Activated CD8-positive, alpha-beta T cell treated with anti-CD3 and anti-CD28 coated beads for 36 hours (primary cell): ENCODE measurements at regions of chr7 and their contacts with region 1.

Region 1: GRCh38 chr7:121395961-121396757 is at the start of gene FAM3C:
- DNase-seq: peak; percentile 90
- ATAC-seq: peak; percentile 88
- H3K4me3 Mint-ChIP-seq: peak within 1 kb of the TSS; percentile 79
- H3K27ac Mint-ChIP-seq: peak within 1 kb of the TSS; percentile 92
- H3K4me1 Mint-ChIP-seq: peaks cover 40% of the 10 kb centered on the region
- H3K27me3 Mint-ChIP-seq: no peaks in the 10 kb centered on the region
- CTCF ChIP-seq: peak; percentile 86
- total RNA-seq, gene FAM3C: 18.6 to 19.1 TPM

Region 2: GRCh38 chr7:121366852-121367431 is 29.2 kb before region 1 on chr7:
- CTCF ChIA-PET with region 1: interaction called, 28 read pairs
- POLR2A ChIA-PET with region 1: interaction called, 5 read pairs
- intact Hi-C with region 1: no loop called
- DNase-seq: peak; percentile 33
- ATAC-seq: peak; percentile 45
- H3K4me3 Mint-ChIP-seq: no peak overlapping the region
- H3K27ac Mint-ChIP-seq: no peak overlapping the region
- H3K4me1 Mint-ChIP-seq: peaks cover 24% of the 10 kb centered on the region
- H3K27me3 Mint-ChIP-seq: no peaks in the 10 kb centered on the region
- CTCF ChIP-seq: peak; percentile 84

Region 3: GRCh38 chr7:121372376-121373010 is 23.7 kb before region 1 on chr7:
- CTCF ChIA-PET with region 1: interaction called, 28 read pairs
- POLR2A ChIA-PET with region 1: interaction called, 5 read pairs
- intact Hi-C with region 1: no loop called
- DNase-seq: peak; percentile 13
- ATAC-seq: peak; percentile 81
- H3K4me3 Mint-ChIP-seq: peak overlapping the region; percentile 34
- H3K27ac Mint-ChIP-seq: peak overlapping the region; percentile 88
- H3K4me1 Mint-ChIP-seq: peaks cover 48% of the 10 kb centered on the region
- H3K27me3 Mint-ChIP-seq: no peaks in the 10 kb centered on the region
- CTCF ChIP-seq: no peak

Region 4: GRCh38 chr7:121385800-121386179 is 10.4 kb before region 1 on chr7:
- CTCF ChIA-PET with region 1: interaction called, 83 read pairs
- POLR2A ChIA-PET with region 1: interaction called, 13 read pairs
- intact Hi-C with region 1: no loop called
- DNase-seq: no peak
- ATAC-seq: peak; percentile 86
- H3K4me3 Mint-ChIP-seq: no peak overlapping the region
- H3K27ac Mint-ChIP-seq: peak overlapping the region; percentile 53
- H3K4me1 Mint-ChIP-seq: peaks cover 73% of the 10 kb centered on the region
- H3K27me3 Mint-ChIP-seq: no peaks in the 10 kb centered on the region
- CTCF ChIP-seq: no peak

Region 5: GRCh38 chr7:121406944-121407343 is 10.8 kb after region 1 on chr7:
- CTCF ChIA-PET with region 1: interaction called, 20 read pairs
- POLR2A ChIA-PET with region 1: interaction called, 5 read pairs
- intact Hi-C with region 1: no loop called
- DNase-seq: no peak
- ATAC-seq: no peak
- H3K4me3 Mint-ChIP-seq: no peak overlapping the region
- H3K27ac Mint-ChIP-seq: no peak overlapping the region
- H3K4me1 Mint-ChIP-seq: peaks cover 18% of the 10 kb centered on the region
- H3K27me3 Mint-ChIP-seq: peaks cover 2% of the 10 kb centered on the region
- CTCF ChIP-seq: no peak

Region 6: GRCh38 chr7:121437456-121438127 is 41.4 kb after region 1 on chr7:
- CTCF ChIA-PET with region 1: interaction called, 18 read pairs
- POLR2A ChIA-PET with region 1: interaction called, 3 read pairs
- intact Hi-C with region 1: no loop called
- DNase-seq: no peak
- ATAC-seq: no peak
- H3K4me3 Mint-ChIP-seq: peak overlapping the region; percentile 50
- H3K27ac Mint-ChIP-seq: peak overlapping the region; percentile 89
- H3K4me1 Mint-ChIP-seq: peaks cover 36% of the 10 kb centered on the region
- H3K27me3 Mint-ChIP-seq: no peaks in the 10 kb centered on the region
- CTCF ChIP-seq: no peak